ENCODE measurements at regions of chr16 and their contacts with region 1.

Region 1: GRCh38 chr16:63361032-63361624 is 1324.9 kb upstream of the CDH8 start:
- DNase-seq: peak; percentile 56
- H3K4me3 ChIP-seq: no peak overlapping the region
- H3K27ac ChIP-seq: no peak overlapping the region
- H3K4me1 ChIP-seq: no peaks in the 10 kb centered on the region
- H3K27me3 ChIP-seq: no peaks in the 10 kb centered on the region
- CTCF ChIP-seq: peak; percentile 56 to 71
- POLR2A ChIP-seq: no peak

Region 2: GRCh38 chr16:63080746-63081145 is 280.4 kb before region 1 on chr16:
- CTCF ChIA-PET with region 1: no interaction called
- POLR2A ChIA-PET with region 1: no interaction called
- dilution Hi-C with region 1: no loop called
- intact Hi-C with region 1: no loop called
- DNase-seq: no peak
- H3K4me3 ChIP-seq: no peak overlapping the region
- H3K27ac ChIP-seq: no peak overlapping the region
- H3K4me1 ChIP-seq: no peaks in the 10 kb centered on the region
- H3K27me3 ChIP-seq: no peaks in the 10 kb centered on the region
- CTCF ChIP-seq: no peak
- POLR2A ChIP-seq: no peak

Region 3: DNA sequence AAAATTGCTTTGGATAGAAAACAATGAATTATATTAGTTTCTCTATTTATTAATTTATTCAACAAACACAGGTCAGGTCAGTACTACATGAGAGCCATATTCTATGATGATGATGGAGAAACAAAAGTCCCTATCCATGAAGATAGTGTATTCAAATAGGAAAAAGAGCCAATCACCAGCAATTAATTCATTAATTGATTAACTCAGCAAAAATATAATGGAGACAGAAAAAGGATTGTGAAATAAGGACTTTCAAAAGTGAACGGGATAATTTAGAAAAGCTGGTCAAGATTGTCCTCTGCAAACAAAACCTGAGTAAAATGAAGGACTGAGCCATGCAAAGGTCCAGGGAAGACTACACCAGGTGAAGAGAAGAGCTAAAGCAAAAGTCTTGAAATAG is 192.9 kb after region 1 on chr16:
- CTCF ChIA-PET with region 1: no interaction called
- POLR2A ChIA-PET with region 1: no interaction called
- dilution Hi-C with region 1: no loop called
- intact Hi-C with region 1: no loop called
- DNase-seq: no peak
- H3K4me3 ChIP-seq: no peak overlapping the region
- H3K27ac ChIP-seq: no peak overlapping the region
- H3K4me1 ChIP-seq: no peaks in the 10 kb centered on the region
- H3K27me3 ChIP-seq: no peaks in the 10 kb centered on the region
- CTCF ChIP-seq: no peak
- POLR2A ChIP-seq: no peak

Region 4: DNA sequence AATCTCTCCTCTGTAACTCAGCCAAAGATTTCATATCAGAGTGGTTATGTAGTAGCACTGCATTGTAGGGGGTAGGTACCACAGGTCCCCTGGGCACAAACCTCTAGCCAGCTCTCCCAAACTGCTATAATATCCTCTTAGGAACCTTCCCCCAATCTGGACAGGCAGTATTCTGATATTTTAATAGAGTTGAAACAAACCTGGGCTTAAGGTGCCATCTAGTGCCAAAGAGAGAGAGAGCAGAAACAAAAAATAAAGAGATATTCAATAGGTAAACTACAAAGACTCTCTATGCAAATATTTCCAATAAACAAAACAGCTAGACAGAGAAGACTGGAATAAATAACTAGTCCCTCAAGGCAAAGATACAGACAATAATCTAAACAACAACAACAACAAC is 690.7 kb after region 1 on chr16:
- CTCF ChIA-PET with region 1: interaction called, 7 read pairs
- POLR2A ChIA-PET with region 1: no interaction called
- dilution Hi-C with region 1: no loop called
- intact Hi-C with region 1: loop called (anchors 2 kb)
- DNase-seq: peak; percentile 19
- H3K4me3 ChIP-seq: no peak overlapping the region
- H3K27ac ChIP-seq: no peak overlapping the region
- H3K4me1 ChIP-seq: no peaks in the 10 kb centered on the region
- H3K27me3 ChIP-seq: no peaks in the 10 kb centered on the region
- CTCF ChIP-seq: peak in 1 of 2 donors; percentile 19
- POLR2A ChIP-seq: no peak

Region 5: DNA sequence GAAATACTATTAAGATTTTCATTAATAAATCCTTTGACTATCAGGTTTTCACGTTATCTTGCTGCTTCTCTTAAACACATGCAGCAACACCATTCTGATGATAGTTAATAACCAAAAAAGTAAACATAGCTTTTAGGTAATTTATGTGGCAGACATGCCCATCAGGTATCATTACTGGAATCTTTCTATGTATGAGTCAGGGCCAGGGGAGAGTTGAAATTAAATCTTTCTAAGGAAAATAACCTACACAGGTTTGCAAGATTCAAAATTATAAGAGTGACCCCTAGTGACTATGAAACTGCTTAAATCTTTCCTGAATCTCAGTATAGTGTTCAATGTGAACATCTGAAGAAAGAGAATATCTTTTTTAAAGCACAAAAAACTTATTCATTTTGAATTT is 1094.1 kb after region 1 on chr16:
- CTCF ChIA-PET with region 1: no interaction called
- POLR2A ChIA-PET with region 1: no interaction called
- dilution Hi-C with region 1: no loop called
- intact Hi-C with region 1: loop called (anchors 10 kb)
- DNase-seq: peak; percentile 38
- H3K4me3 ChIP-seq: no peak overlapping the region
- H3K27ac ChIP-seq: no peak overlapping the region
- H3K4me1 ChIP-seq: no peaks in the 10 kb centered on the region
- H3K27me3 ChIP-seq: no peaks in the 10 kb centered on the region
- CTCF ChIP-seq: no peak
- POLR2A ChIP-seq: no peak

Measured in endothelial cell of umbilical vein (primary cell).